Calu3 (cell line): ENCODE measurements at regions of chr1 and their contacts with region 1.

Region 1: DNA sequence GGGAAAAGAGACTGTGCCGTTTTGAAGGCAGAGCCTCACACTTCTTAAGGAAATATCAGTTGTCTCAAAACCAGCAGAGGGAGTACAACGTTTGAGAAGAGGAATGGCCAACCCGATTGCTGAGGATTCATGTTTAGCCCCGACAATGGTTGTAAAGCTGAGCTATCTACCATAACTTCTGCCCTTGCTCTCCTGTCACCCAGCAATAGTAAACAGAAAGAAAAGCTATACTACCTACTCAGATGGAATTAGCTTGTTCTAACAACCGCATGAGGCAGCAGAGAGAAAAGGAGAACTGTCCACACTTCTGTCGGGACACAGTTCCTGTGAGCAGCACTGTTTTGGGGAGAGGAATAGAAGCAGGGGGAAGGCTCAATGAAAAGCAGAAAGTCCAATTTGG is 91.2 kb downstream of the SLC45A1 start:
- DNase-seq: no peak
- H3K4me3 Mint-ChIP-seq: no peak overlapping the region
- H3K27ac Mint-ChIP-seq: peak overlapping the region; percentile 63
- H3K4me1 Mint-ChIP-seq: peaks cover 19% of the 10 kb centered on the region
- H3K27me3 Mint-ChIP-seq: no peaks in the 10 kb centered on the region
- CTCF ChIP-seq: no peak

Region 2: GRCh38 chr1:7704214-7705047 is 704.7 kb before region 1 on chr1:
- CTCF ChIA-PET with region 1: no interaction called
- intact Hi-C with region 1: no loop called
- DNase-seq: peak; percentile 95
- H3K4me3 Mint-ChIP-seq: peak overlapping the region; percentile 64
- H3K27ac Mint-ChIP-seq: no peak overlapping the region
- H3K4me1 Mint-ChIP-seq: no peaks in the 10 kb centered on the region
- H3K27me3 Mint-ChIP-seq: peaks cover 41% of the 10 kb centered on the region
- CTCF ChIP-seq: no peak

Region 3: DNA sequence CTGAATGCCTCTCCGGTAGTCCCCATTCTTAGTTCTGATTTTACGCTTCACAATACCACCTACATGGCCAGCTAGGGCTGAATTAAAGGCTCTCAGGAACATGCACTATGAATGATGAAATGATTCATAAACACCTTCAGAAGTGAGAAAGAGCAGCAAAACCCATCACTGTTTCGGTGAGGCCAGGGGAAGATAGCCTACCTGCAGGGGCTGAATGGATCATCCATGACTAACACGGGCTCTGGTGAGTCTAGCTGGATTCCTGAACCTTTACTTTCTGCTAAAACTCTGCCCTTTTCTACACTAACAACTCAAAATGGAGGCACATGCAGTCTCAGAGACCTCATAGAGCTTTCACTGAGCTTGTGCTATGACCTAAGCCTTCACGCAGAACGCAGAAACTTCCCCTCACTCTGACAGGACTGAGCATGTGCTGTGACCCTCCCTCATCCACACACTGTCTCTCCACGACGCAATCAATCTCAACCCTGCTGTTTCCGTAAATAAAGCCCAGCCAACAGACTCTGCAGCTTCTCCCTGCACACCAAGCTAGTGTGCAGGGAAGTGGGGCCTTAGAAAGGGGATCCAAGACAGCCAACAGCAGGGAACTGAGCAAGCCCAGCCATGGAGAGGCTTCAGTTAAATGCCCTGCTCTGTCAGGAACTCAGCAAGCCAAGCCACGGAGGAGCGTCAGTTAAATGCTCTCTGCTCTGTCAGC is 116.6 kb after region 1 on chr1:
- CTCF ChIA-PET with region 1: interaction called, 12 read pairs
- intact Hi-C with region 1: loop called (anchors 1 kb)
- DNase-seq: peak; percentile 66
- H3K4me3 Mint-ChIP-seq: no peak overlapping the region
- H3K27ac Mint-ChIP-seq: no peak overlapping the region
- H3K4me1 Mint-ChIP-seq: peaks cover 34% of the 10 kb centered on the region
- H3K27me3 Mint-ChIP-seq: no peaks in the 10 kb centered on the region
- CTCF ChIP-seq: no peak